Activated naive CD4-positive, alpha-beta T cell treated with anti-CD3 and anti-CD28 coated beads for 36 hours (primary cell): ENCODE measurements at regions of chr3 and their contacts with region 1.

Region 1: GRCh38 chr3:132399054-132399929 is 18.0 kb upstream of the DNAJC13 start:
- DNase-seq: peak; percentile 44
- H3K4me3 Mint-ChIP-seq: no peak overlapping the region
- H3K27ac Mint-ChIP-seq: no peak overlapping the region
- H3K4me1 Mint-ChIP-seq: no peaks in the 10 kb centered on the region
- H3K27me3 Mint-ChIP-seq: no peaks in the 10 kb centered on the region

Region 2: DNA sequence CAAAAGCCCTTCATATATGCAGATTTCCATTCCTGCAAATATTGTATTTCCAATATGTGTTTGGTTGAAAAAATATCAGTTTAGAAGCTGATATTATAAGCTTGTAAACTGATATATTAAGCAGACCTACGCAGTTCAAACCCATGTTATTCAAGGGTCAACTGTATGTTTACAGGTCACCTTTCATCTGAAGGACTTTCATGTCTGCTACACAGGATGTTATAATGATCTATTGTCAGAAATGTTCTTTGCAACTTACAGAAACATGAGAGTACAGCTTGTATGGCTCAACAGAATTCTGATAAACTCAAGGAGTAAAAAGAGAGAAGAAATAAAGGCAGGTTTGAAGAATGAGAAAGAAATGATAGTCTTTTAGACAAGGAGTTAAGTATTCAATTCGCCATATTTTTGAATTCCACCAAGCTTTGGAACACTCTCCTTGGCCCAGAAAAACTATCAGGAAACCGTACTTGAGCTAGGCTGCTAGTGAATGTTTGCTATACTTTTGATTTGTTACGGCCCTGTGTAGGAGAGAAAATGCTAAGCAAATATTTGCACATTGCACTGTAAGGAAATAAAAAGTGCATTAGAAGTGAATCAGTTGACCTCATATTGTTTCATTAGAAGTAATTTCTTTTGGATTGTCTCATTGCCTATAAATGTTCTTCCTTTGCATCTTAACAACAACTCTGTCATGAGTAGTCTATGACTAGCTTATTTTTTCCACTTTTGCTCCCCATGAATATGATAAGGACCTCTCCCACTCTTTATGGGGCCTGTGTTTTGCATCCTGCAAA is 1291.5 kb before region 1 on chr3:
- CTCF ChIA-PET with region 1: no interaction called
- intact Hi-C with region 1: no loop called
- DNase-seq: no peak
- H3K4me3 Mint-ChIP-seq: no peak overlapping the region
- H3K27ac Mint-ChIP-seq: no peak overlapping the region
- H3K4me1 Mint-ChIP-seq: no peaks in the 10 kb centered on the region
- H3K27me3 Mint-ChIP-seq: no peaks in the 10 kb centered on the region

Region 3: DNA sequence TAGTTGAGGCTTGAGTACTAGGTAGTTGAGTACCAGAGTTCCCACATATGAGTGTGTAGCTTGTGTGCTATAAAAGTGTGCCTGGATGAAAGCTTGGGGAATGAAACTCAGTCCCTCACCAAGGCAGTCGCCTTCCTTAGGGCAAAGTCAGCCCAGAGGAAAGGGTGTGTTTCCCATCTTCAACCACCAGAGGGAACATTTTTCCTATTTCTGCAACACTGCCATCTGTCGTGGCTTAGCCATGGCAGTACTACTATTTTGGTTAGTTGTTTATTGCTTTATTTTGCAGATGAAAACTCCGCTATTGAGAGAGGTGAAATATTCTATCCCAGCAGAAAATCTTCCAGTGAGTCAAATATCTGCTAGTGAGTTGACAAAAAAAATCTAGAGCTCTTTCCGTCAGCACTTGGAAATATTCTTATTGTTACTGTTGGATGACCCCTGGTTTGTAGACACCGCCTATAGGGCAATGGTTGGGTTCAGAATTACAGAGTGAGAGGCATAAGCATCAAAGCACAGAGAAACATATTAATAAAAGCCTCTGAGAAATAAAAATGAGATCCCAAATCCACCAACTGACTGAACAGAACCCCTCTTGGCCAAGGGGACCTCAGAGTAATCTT is 604.4 kb before region 1 on chr3:
- CTCF ChIA-PET with region 1: interaction called, 4 read pairs
- intact Hi-C with region 1: loop called (anchors 10 kb)
- DNase-seq: peak; percentile 43
- H3K4me3 Mint-ChIP-seq: no peak overlapping the region
- H3K27ac Mint-ChIP-seq: no peak overlapping the region
- H3K4me1 Mint-ChIP-seq: peaks cover 8% of the 10 kb centered on the region
- H3K27me3 Mint-ChIP-seq: peaks cover 13% of the 10 kb centered on the region

Region 4: GRCh38 chr3:132038198-132038825 is 361.0 kb before region 1 on chr3:
- CTCF ChIA-PET with region 1: interaction called, 3 read pairs
- intact Hi-C with region 1: loop called (anchors 2 kb)
- DNase-seq: no peak
- H3K4me3 Mint-ChIP-seq: no peak overlapping the region
- H3K27ac Mint-ChIP-seq: no peak overlapping the region
- H3K4me1 Mint-ChIP-seq: peaks cover 8% of the 10 kb centered on the region
- H3K27me3 Mint-ChIP-seq: peaks cover 60% of the 10 kb centered on the region

Region 5: GRCh38 chr3:132253262-132253878 is 145.9 kb before region 1 on chr3:
- CTCF ChIA-PET with region 1: interaction called, 7 read pairs
- intact Hi-C with region 1: loop called (anchors 1 kb)
- DNase-seq: peak; percentile 25
- H3K4me3 Mint-ChIP-seq: no peak overlapping the region
- H3K27ac Mint-ChIP-seq: no peak overlapping the region
- H3K4me1 Mint-ChIP-seq: no peaks in the 10 kb centered on the region
- H3K27me3 Mint-ChIP-seq: peaks cover 2% of the 10 kb centered on the region

Region 6: GRCh38 chr3:132352541-132353143 is 46.6 kb before region 1 on chr3:
- CTCF ChIA-PET with region 1: interaction called, 87 read pairs
- intact Hi-C with region 1: loop called (anchors 1 kb)
- DNase-seq: peak; percentile 84
- H3K4me3 Mint-ChIP-seq: no peak overlapping the region
- H3K27ac Mint-ChIP-seq: no peak overlapping the region
- H3K4me1 Mint-ChIP-seq: peaks cover 2% of the 10 kb centered on the region
- H3K27me3 Mint-ChIP-seq: no peaks in the 10 kb centered on the region